ENCODE measurements at regions of chr9 and their contacts with region 1.

Region 1: GRCh38 chr9:1253064-1253979 is 203.2 kb downstream of the DMRT2 start:
- DNase-seq: no peak
- ATAC-seq: no peak

Region 2: GRCh38 chr9:1231998-1232919 is 21.1 kb before region 1 on chr9:
- intact Hi-C with region 1: no loop called
- DNase-seq: peak; percentile 82
- ATAC-seq: peak; percentile 93

Region 3: DNA sequence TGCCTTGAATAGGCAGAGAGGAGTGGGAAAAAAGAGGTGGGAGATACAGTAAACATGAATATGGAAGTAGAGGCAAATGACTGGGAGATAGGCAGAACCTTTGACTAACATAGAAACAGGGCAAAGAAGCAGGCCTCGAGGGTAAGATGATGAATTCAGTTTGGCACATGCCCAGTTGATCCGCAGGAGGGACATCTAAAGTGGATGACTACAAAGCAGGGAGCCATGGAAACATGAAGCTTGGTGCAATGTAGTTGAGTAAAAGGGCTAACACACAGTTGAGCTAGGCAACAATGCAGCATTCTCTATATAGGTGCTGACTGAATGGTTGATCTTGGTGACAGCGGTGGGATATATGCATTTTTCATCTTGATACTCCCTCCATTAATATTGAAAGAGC is 50.6 kb after region 1 on chr9:
- intact Hi-C with region 1: loop called (anchors 5 kb)
- DNase-seq: no peak
- ATAC-seq: no peak

Region 4: DNA sequence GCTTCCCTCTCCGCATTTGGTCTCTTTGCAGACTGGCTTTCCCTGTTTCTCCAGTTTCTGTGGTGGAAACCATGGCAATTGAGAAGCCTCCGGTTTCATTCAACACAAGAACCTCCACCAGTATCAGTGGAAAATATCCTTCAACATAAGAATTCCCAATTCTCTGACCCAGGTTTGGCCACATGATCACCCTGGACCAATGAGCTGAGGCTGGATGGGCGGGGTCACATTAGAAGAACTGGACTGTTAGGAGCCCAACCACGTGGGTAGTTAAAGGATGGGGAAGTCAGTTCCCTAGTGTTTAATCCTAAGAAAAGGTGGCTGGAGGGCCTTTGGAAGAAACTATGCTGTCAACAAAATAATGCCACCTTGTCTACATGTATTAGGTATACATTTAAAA is 133.1 kb after region 1 on chr9:
- intact Hi-C with region 1: no loop called
- DNase-seq: no peak
- ATAC-seq: no peak

Measured in Right ventricle myocardium inferior (tissue), 1 donor.